CD4-positive, alpha-beta T cell (primary cell): ENCODE measurements at regions of chr5 and their contacts with region 1.

Region 1: GRCh38 chr5:14399054-14399692 is 182.4 kb upstream of the OTULINL start:
- DNase-seq: peak in 4 of 14 experiments; percentile 51 to 73 (median 60)
- ATAC-seq: peak; percentile 57
- H3K4me3 ChIP-seq: no peak overlapping the region
- H3K4me3 Mint-ChIP-seq: no peak overlapping the region
- H3K27ac ChIP-seq: no peak overlapping the region
- H3K27ac Mint-ChIP-seq: no peak overlapping the region
- H3K4me1 ChIP-seq: no peaks in the 10 kb centered on the region
- H3K4me1 Mint-ChIP-seq: peaks cover 15% of the 10 kb centered on the region
- H3K27me3 ChIP-seq: no peaks in the 10 kb centered on the region
- H3K27me3 Mint-ChIP-seq: no peaks in the 10 kb centered on the region
- CTCF ChIP-seq: peak; percentile 77

Region 2: DNA sequence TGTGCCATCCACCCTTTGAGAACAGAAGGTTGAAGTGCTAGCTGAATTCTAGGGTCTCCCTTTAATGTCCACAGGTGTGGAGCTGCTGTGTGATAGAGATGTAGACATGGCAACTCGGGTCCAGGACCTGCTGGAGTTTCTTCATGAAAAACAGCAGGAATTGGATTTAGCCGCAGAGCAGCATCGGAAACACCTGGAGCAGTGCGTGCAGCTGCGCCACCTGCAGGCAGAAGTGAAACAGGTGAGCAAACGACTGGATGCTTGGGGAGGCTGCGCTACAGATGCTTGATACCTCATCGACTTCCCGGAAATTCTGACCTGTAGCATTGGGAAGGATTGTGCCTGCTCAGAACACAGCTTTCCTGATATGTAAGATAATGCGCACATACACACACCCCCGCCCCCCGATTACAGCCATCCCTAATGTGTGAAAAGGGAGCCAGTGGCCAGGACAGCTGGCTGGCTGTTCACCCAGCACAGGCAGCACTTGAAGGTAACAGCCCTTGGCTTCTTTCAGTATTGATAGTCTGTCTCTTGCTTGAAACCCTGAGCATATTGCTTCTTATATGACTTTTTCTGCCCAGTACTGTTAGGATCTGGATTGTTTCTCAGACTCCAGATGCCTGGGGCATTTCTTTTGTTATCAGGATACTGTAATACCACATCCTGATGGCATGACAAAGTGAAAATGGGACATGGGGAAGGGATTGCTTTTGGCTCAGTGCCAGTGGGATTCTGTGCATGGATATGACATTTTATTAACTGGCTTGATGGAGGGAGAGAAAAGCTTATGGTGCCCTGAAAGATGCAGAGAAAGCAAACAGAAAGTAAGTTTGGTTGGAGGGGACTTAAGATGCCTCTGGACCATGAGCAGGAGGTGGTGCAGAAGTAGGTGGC is 34.3 kb before region 1 on chr5:
- CTCF ChIA-PET with region 1: no interaction called
- POLR2A ChIA-PET with region 1: no interaction called
- intact Hi-C with region 1: loop called in 1 of 2 experiments (anchors 1 kb)
- DNase-seq: peak in 6 of 14 experiments; percentile 5 to 31 (median 14)
- ATAC-seq: no peak
- H3K4me3 ChIP-seq: no peak overlapping the region
- H3K4me3 Mint-ChIP-seq: no peak overlapping the region
- H3K27ac ChIP-seq: no peak overlapping the region
- H3K27ac Mint-ChIP-seq: no peak overlapping the region
- H3K4me1 ChIP-seq: peaks cover 17% of the 10 kb centered on the region
- H3K4me1 Mint-ChIP-seq: peaks cover 36% of the 10 kb centered on the region
- H3K27me3 ChIP-seq: peaks cover 0 to 4% of the 10 kb centered on the region in 2 experiments
- H3K27me3 Mint-ChIP-seq: no peaks in the 10 kb centered on the region
- CTCF ChIP-seq: no peak

Region 3: GRCh38 chr5:14415024-14415697 is 16.0 kb after region 1 on chr5:
- CTCF ChIA-PET with region 1: interaction called, 16 read pairs
- POLR2A ChIA-PET with region 1: interaction called, 8 read pairs
- intact Hi-C with region 1: no loop called
- DNase-seq: peak in 5 of 14 experiments; percentile 14 to 41 (median 27)
- ATAC-seq: no peak
- H3K4me3 ChIP-seq: no peak overlapping the region
- H3K4me3 Mint-ChIP-seq: peak overlapping the region; percentile 78
- H3K27ac ChIP-seq: peak overlapping the region in 1 of 2 donors; percentile 61
- H3K27ac Mint-ChIP-seq: peak overlapping the region; percentile 88
- H3K4me1 ChIP-seq: peaks cover 37% of the 10 kb centered on the region
- H3K4me1 Mint-ChIP-seq: peaks cover 46% of the 10 kb centered on the region
- H3K27me3 ChIP-seq: no peaks in the 10 kb centered on the region
- H3K27me3 Mint-ChIP-seq: no peaks in the 10 kb centered on the region
- CTCF ChIP-seq: no peak

Region 4: DNA sequence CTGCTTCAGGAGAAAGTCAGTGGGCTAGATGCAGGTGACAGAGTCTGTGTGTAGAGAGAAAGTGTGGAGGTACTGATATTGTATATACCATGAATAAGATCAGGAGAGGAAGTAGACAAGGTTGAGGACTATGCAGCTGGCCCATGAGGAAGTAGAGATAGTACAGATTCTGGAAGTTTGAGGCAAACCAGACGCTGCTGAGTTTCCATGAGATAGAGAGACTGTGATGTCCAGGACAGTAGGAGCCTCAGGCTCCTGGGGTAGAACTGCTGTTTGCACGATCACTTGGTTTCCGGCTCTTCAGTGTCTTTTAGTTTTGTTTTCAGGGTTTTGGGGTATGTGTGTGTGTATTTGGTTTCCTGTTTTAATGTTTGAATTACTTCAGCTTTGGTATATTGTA is 196.0 kb after region 1 on chr5:
- CTCF ChIA-PET with region 1: no interaction called
- POLR2A ChIA-PET with region 1: no interaction called
- intact Hi-C with region 1: loop called in 1 of 2 experiments (anchors 5 kb)
- DNase-seq: peak in 7 of 14 experiments; percentile 12 to 78 (median 51)
- ATAC-seq: peak; percentile 76
- H3K4me3 ChIP-seq: peak overlapping the region; percentile 37
- H3K4me3 Mint-ChIP-seq: peak overlapping the region; percentile 83
- H3K27ac ChIP-seq: peak overlapping the region; percentile 68 to 81
- H3K27ac Mint-ChIP-seq: peak overlapping the region; percentile 91
- H3K4me1 ChIP-seq: peaks cover 74% of the 10 kb centered on the region
- H3K4me1 Mint-ChIP-seq: peaks cover 89% of the 10 kb centered on the region
- H3K27me3 ChIP-seq: no peaks in the 10 kb centered on the region
- H3K27me3 Mint-ChIP-seq: no peaks in the 10 kb centered on the region
- CTCF ChIP-seq: no peak

Region 5: GRCh38 chr5:14650052-14650451 is 250.9 kb after region 1 on chr5:
- CTCF ChIA-PET with region 1: interaction called, 13 read pairs
- POLR2A ChIA-PET with region 1: interaction called, 6 read pairs
- intact Hi-C with region 1: loop called (anchors 1 kb)
- DNase-seq: no peak
- ATAC-seq: no peak
- H3K4me3 ChIP-seq: no peak overlapping the region
- H3K4me3 Mint-ChIP-seq: no peak overlapping the region
- H3K27ac ChIP-seq: no peak overlapping the region
- H3K27ac Mint-ChIP-seq: no peak overlapping the region
- H3K4me1 ChIP-seq: no peaks in the 10 kb centered on the region
- H3K4me1 Mint-ChIP-seq: peaks cover 2% of the 10 kb centered on the region
- H3K27me3 ChIP-seq: peaks cover 0 to 5% of the 10 kb centered on the region in 2 experiments
- H3K27me3 Mint-ChIP-seq: peaks cover 17% of the 10 kb centered on the region
- CTCF ChIP-seq: no peak